ENCODE measurements at regions of chr11 and their contacts with region 1.

Region 1: GRCh38 chr11:110429731-110430266 is at the start of gene FDX1:
- DNase-seq: peak; percentile 50 to 86
- H3K4me3 ChIP-seq: peak within 1 kb of the TSS; percentile 81 to 92 (median 88)
- H3K27ac ChIP-seq: peak within 1 kb of the TSS; percentile 75; the same call in 1 of the 2 replicates
- H3K4me1 ChIP-seq: peaks cover 0 to 7% (median 2%) of the 10 kb centered on the region in 4 experiments; a peak in 4 of 7 replicates
- H3K27me3 ChIP-seq: no peaks in the 10 kb centered on the region; a peak in 1 of 7 replicates
- CTCF ChIP-seq: peak; percentile 45 to 68 (median 66)
- EP300 ChIP-seq: no peak
- POLR2A ChIP-seq: peak; percentile 48 to 80; a peak in 2 of 3 replicates
- RAD21 ChIP-seq: peak in 1 of 2 experiments; percentile 38; a peak in 2 of 4 replicates
- total RNA-seq, gene FDX1: 9.4 and 9.6 TPM in 2 replicates

Region 2: GRCh38 chr11:110173811-110174644 is 255.8 kb before region 1 on chr11:
- CTCF ChIA-PET with region 1: interaction called, 15 read pairs
- POLR2A ChIA-PET with region 1: no interaction called
- DNase-seq: peak; percentile 69 to 92
- H3K4me3 ChIP-seq: peak overlapping the region in 1 of 4 experiments; percentile 34; a peak in 1 of 8 replicates
- H3K27ac ChIP-seq: no peak overlapping the region
- H3K4me1 ChIP-seq: peaks cover 9 to 32% (median 21%) of the 10 kb centered on the region in 4 experiments
- H3K27me3 ChIP-seq: no peaks in the 10 kb centered on the region
- CTCF ChIP-seq: peak; percentile 69 to 93 (median 81)
- EP300 ChIP-seq: no peak
- POLR2A ChIP-seq: no peak
- RAD21 ChIP-seq: peak; percentile 55 to 67

Region 3: DNA sequence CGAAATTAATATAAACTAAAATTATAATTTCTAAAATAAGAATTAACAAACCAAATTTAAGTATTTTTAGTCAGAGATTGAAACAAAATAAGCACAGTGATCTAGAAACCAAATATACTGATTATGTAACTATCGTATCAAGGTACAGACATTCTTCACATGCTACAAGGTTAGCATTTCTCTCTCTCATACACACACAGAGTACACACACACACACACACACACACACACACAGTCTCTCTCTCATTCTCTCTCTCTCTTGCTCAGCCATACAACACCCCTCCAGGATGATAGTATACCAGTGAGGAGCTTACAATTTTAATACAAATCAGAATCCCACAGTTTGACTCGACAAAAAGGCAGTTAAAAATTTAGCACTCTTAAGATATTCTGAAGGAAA is 199.4 kb before region 1 on chr11:
- CTCF ChIA-PET with region 1: interaction called, 14 read pairs
- POLR2A ChIA-PET with region 1: no interaction called
- DNase-seq: no peak
- H3K4me3 ChIP-seq: no peak overlapping the region
- H3K27ac ChIP-seq: no peak overlapping the region
- H3K4me1 ChIP-seq: no peaks in the 10 kb centered on the region
- H3K27me3 ChIP-seq: no peaks in the 10 kb centered on the region
- CTCF ChIP-seq: no peak
- EP300 ChIP-seq: no peak
- POLR2A ChIP-seq: no peak
- RAD21 ChIP-seq: no peak

Region 4: DNA sequence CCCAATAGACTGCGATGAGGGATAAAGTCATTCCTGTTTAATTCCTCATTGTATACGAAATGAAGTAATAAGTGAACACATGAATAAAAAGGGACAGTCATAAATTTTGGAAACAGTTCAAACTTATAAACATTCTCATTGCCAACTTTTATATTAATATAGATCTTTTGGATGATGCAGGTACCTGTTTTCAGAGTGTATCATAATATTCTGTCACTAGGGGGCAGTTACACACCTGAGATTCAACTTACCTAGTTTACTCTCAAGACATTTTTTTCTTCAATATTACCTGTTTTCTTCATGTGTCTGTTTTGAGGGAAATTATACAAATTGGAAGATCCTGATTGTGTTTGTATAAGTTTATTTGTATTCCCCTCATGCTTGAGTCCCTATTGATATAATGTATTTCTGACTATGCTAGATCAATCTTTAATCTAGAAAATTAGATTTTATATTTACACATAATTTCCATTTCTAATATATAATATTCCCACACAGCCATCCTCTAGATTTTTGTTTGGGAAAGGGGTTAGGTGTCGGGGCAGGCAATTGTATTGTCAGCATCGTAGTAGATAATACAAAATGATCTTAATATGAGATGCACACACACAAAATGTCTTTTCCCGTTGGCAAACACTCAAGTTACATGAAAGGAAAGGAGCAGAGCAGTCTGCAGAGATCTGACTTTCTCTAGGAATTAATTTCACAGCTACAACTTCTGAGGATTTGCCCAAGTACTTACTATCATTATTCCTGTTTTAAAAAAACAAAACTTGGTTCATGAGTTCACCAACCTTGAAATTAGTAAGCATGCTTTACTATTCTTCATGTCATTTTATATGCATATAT is 18.3 kb after region 1 on chr11:
- CTCF ChIA-PET with region 1: interaction called, 37 read pairs
- POLR2A ChIA-PET with region 1: no interaction called
- DNase-seq: no peak
- H3K4me3 ChIP-seq: no peak overlapping the region
- H3K27ac ChIP-seq: no peak overlapping the region
- H3K4me1 ChIP-seq: no peaks in the 10 kb centered on the region
- H3K27me3 ChIP-seq: no peaks in the 10 kb centered on the region
- CTCF ChIP-seq: peak in 2 of 3 experiments; percentile 24 to 30; a peak in 2 of 4 replicates
- EP300 ChIP-seq: no peak
- POLR2A ChIP-seq: no peak
- RAD21 ChIP-seq: peak in 1 of 2 experiments; percentile 51